Ascending aorta (tissue), 2 donors: ENCODE measurements at regions of chr6 and their contacts with region 1.

Region 1: DNA sequence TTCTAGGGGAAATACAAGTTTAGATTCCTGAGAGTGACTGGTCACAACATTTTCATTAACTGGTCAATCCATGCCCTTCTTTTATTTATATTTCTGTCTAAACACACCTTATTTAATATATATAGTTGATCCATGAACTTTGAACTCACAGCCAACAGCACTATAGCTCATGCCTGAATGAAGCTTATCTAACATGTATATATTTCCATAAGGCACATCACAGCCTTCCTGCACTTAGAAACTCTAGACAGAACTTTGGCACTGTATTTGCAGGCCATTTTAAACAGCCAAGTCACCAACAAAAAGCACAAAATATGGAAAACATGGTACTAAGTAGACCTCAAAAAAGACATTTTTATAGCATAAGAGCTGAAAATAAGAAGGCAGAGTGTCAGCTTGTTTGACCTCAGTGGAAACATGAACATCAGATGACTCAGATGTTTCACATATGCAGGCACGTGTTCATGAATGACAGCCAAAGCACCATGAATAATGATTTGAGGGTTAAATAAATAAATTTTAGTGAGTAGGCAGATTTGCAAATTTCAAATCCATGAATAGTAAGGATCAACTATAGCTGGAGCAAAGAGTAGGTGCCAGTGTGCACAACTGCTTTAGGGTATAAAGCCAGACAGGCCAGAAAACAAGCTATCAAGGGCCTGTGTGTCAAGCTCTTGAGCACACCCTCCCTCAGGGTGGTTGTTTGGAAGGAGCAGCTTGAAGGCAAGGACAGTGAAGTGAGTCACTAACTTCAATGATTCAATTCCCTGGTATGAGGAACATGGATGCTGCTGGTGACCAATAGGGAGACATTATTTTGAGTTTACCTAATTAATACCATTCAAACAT is 88.9 kb upstream of the NT5E start:
- DNase-seq: peak in 1 of 2 donors; percentile 71
- H3K4me3 ChIP-seq: no peak overlapping the region
- H3K27ac ChIP-seq: peak overlapping the region; percentile 76 to 81
- H3K4me1 ChIP-seq: peaks cover 0 to 10% of the 10 kb centered on the region in 2 donors
- H3K27me3 ChIP-seq: no peaks in the 10 kb centered on the region
- CTCF ChIP-seq: no peak

Region 2: GRCh38 chr6:85390105-85390728 is 29.2 kb after region 1 on chr6:
- intact Hi-C with region 1: no loop called
- DNase-seq: no peak
- H3K4me3 ChIP-seq: no peak overlapping the region
- H3K27ac ChIP-seq: no peak overlapping the region
- H3K4me1 ChIP-seq: no peaks in the 10 kb centered on the region
- H3K27me3 ChIP-seq: no peaks in the 10 kb centered on the region
- CTCF ChIP-seq: no peak

Region 3: GRCh38 chr6:85404502-85405174 is 43.6 kb after region 1 on chr6:
- intact Hi-C with region 1: loop called (anchors 2 kb)
- DNase-seq: peak in 1 of 2 donors; percentile 73
- H3K4me3 ChIP-seq: no peak overlapping the region
- H3K27ac ChIP-seq: peak overlapping the region; percentile 80 to 81
- H3K4me1 ChIP-seq: peaks cover 7 to 28% of the 10 kb centered on the region in 2 donors
- H3K27me3 ChIP-seq: no peaks in the 10 kb centered on the region
- CTCF ChIP-seq: no peak

Region 4: DNA sequence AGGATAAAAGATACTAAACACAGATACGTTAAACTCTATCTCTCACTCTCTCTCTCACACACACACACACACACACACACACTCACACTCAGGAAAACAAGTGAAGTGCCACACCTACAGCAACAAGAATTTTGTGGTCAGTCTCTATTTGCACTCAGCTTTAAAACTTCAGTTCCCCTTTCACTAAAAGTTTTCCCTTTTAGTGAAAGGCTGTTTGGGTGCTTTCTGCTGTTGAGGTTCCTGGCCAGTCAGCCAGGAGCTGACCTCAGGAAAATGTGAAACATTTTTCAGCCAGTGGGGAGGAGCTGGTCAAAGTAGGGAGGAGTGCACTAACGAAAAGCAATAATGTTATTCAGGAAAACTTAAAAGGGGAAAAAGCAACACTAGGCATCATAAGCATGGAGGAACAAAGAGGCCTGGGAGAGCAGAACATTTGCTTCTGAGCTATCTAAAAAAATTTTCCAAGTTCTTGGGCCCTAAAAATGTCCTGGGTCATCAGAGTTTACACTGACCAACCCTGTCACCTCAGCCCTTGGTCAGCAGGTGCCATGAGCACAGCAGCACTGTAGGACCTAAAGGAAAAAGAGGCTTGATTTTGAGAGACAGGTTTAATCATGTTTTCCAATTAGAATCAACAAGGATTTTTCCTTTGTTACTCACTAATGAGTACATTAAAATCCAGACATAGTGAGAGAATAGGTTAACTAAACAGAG is 58.2 kb after region 1 on chr6:
- intact Hi-C with region 1: loop called (anchors 5 kb)
- DNase-seq: no peak
- H3K4me3 ChIP-seq: no peak overlapping the region
- H3K27ac ChIP-seq: peak overlapping the region; percentile 53 to 62
- H3K4me1 ChIP-seq: peaks cover 4 to 10% of the 10 kb centered on the region in 2 donors
- H3K27me3 ChIP-seq: no peaks in the 10 kb centered on the region
- CTCF ChIP-seq: no peak